ENCODE measurements at regions of chrX and their contacts with region 1.

Region 1: GRCh38 chrX:13387666-13388494 is 68.0 kb upstream of the ATXN3L start:
- DNase-seq: no peak
- ATAC-seq: no peak

Region 2: DNA sequence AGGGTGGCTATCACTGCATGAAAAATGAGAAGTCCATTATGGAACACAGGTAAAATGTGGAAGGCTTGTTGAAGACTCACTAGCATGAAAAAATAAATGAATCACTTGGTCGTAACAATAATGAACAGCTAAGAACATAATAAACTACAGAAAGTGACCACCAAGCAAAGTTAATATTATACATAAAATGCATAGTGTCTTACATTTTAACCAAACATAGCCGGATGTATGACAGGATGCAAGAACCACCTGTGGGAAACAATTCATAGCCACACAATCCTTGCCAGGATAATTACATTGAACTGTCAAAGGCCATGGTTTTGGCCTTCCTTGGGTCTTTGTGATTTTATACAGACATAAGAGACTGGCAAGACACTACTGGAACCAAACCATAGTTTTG is 13.8 kb after region 1 on chrX:
- intact Hi-C with region 1: loop called (anchors 1 kb)
- DNase-seq: no peak
- ATAC-seq: no peak

Measured in sciatic nerve (tissue), 2 donors.